CD4-positive, alpha-beta T cell (primary cell): ENCODE measurements at regions of chr4 and their contacts with region 1.

Region 1: GRCh38 chr4:83455281-83456129 is at the starts of genes HELQ and MRPS18C:
- DNase-seq: peak; percentile 85 to 99 (median 92)
- ATAC-seq: peak; percentile 86
- H3K4me3 ChIP-seq: peak within 1 kb of the TSS; percentile 88
- H3K4me3 Mint-ChIP-seq: peak within 1 kb of the TSS; percentile 99
- H3K27ac ChIP-seq: peak within 1 kb of the TSS; percentile 99 to 100
- H3K27ac Mint-ChIP-seq: peak within 1 kb of the TSS; percentile 100
- H3K4me1 ChIP-seq: peaks cover 12% of the 10 kb centered on the region
- H3K4me1 Mint-ChIP-seq: peaks cover 70% of the 10 kb centered on the region
- H3K27me3 ChIP-seq: no peaks in the 10 kb centered on the region
- H3K27me3 Mint-ChIP-seq: no peaks in the 10 kb centered on the region
- CTCF ChIP-seq: no peak
- total RNA-seq, gene HELQ: 21.5 to 24.1 TPM
- total RNA-seq, gene MRPS18C: 15.7 to 18.0 TPM

Region 2: GRCh38 chr4:82450966-82451755 is 1004.3 kb before region 1 on chr4:
- CTCF ChIA-PET with region 1: no interaction called
- POLR2A ChIA-PET with region 1: no interaction called
- intact Hi-C with region 1: loop called in 1 of 2 experiments (anchors 10 kb)
- DNase-seq: no peak
- ATAC-seq: no peak
- H3K4me3 ChIP-seq: no peak overlapping the region
- H3K4me3 Mint-ChIP-seq: no peak overlapping the region
- H3K27ac ChIP-seq: no peak overlapping the region
- H3K27ac Mint-ChIP-seq: no peak overlapping the region
- H3K4me1 ChIP-seq: no peaks in the 10 kb centered on the region
- H3K4me1 Mint-ChIP-seq: peaks cover 18% of the 10 kb centered on the region
- H3K27me3 ChIP-seq: no peaks in the 10 kb centered on the region
- H3K27me3 Mint-ChIP-seq: no peaks in the 10 kb centered on the region
- CTCF ChIP-seq: no peak

Region 3: DNA sequence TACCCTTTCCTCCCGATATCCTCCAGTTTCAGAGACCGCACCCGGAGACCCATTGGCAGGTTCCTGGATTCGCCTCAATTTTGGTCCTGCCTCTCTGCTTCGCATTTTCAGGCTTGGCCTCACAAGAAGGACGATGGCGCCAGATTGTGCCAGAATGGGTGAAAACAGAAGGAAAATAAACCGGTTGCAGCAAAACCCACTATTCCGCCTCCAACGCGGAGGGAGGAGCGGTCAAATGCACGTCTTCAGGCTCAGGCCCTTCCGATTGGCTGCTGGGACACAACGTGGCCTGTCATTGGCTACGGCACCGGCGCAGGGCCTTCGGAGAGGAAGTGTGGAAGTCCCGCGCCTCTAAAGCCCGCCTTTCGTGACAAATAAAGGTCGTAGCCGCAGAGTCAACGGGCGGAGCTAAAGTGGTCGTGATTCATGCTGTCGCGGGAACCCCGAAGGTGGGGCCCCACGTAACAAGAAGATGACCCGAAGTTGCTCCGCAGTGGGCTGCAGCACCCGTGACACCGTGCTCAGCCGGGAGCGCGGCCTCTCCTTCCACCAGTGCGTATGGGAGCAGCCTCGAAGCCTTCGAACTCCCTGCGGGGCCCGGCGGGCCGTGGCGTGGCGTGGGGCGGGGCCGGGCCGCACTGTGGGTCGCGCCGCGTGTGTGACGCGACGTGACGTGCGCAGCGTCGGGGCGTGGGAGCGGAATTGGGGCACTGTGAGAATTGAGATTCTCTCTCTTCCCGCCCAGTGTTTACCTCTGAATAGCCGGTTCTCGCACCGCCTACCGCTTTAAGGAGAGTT is 555.0 kb before region 1 on chr4 and contains the start of gene THAP9:
- CTCF ChIA-PET with region 1: no interaction called
- POLR2A ChIA-PET with region 1: interaction called, 10 read pairs
- intact Hi-C with region 1: loop called (anchors 5 kb)
- DNase-seq: peak; percentile 94 to 100 (median 96)
- ATAC-seq: peak; percentile 86
- H3K4me3 ChIP-seq: peak within 1 kb of the TSS; percentile 72
- H3K4me3 Mint-ChIP-seq: no peak within 1 kb of the TSS
- H3K27ac ChIP-seq: peak within 1 kb of the TSS; percentile 94 to 99
- H3K27ac Mint-ChIP-seq: no peak within 1 kb of the TSS
- H3K4me1 ChIP-seq: peaks cover 11% of the 10 kb centered on the region
- H3K4me1 Mint-ChIP-seq: peaks cover 13% of the 10 kb centered on the region
- H3K27me3 ChIP-seq: no peaks in the 10 kb centered on the region
- H3K27me3 Mint-ChIP-seq: no peaks in the 10 kb centered on the region
- CTCF ChIP-seq: no peak
- total RNA-seq, gene THAP9: 3.8 to 4.3 TPM

Region 4: DNA sequence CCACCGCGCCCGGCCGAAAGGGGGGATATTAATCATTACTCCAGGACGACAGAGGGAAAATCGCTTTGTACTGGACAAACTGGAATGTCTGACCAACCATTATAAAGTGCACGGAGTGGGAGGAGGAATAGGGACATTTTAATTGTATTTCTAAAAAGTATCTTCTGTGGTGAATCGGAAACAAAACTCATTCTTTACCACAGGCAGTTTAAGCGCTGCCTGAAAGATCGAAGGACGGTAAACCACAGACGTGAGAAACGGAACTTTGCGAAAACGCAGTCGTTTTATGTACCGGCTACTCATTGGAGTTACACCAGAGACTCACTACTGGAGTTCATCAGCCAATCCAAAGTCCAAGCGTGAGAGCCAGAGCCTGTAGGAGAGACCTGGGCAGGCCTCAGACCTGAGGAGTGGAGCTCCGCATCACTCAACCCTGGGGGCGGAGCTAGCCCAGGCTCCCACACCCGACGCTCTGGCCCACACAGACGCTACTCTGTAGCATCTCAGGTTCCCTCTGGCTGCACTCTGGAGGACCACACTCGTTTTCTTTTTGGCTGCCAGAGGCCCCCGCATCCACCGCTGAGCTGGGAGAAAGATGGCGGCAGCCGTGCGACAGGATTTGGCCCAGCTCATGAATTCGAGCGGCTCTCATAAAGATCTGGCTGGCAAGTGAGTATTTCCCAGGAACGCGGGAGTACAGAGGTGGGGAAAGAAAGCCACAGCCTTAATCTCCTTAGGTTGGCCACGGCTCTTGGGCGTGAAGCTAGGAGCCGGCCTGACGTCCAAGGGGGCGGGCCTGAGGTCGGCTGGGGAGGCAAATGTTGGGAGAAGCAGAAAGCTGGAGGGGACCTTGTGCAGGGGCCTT is 420.6 kb before region 1 on chr4 and contains the start of gene COPS4:
- CTCF ChIA-PET with region 1: no interaction called
- POLR2A ChIA-PET with region 1: interaction called, 41 read pairs
- intact Hi-C with region 1: loop called in 1 of 2 experiments (anchors 1 kb)
- DNase-seq: peak; percentile 86 to 100 (median 92)
- ATAC-seq: peak; percentile 95
- H3K4me3 ChIP-seq: peak within 1 kb of the TSS; percentile 83
- H3K4me3 Mint-ChIP-seq: peak within 1 kb of the TSS; percentile 99
- H3K27ac ChIP-seq: peak within 1 kb of the TSS; percentile 84
- H3K27ac Mint-ChIP-seq: peak within 1 kb of the TSS; percentile 90
- H3K4me1 ChIP-seq: peaks cover 28% of the 10 kb centered on the region
- H3K4me1 Mint-ChIP-seq: peaks cover 41% of the 10 kb centered on the region
- H3K27me3 ChIP-seq: no peaks in the 10 kb centered on the region
- H3K27me3 Mint-ChIP-seq: no peaks in the 10 kb centered on the region
- CTCF ChIP-seq: no peak
- total RNA-seq, gene COPS4: 26.0 to 27.6 TPM

Region 5: GRCh38 chr4:83440899-83441298 is 14.6 kb before region 1 on chr4:
- CTCF ChIA-PET with region 1: no interaction called
- POLR2A ChIA-PET with region 1: interaction called, 22 read pairs
- intact Hi-C with region 1: no loop called
- DNase-seq: no peak
- ATAC-seq: no peak
- H3K4me3 ChIP-seq: no peak overlapping the region
- H3K4me3 Mint-ChIP-seq: no peak overlapping the region
- H3K27ac ChIP-seq: no peak overlapping the region
- H3K27ac Mint-ChIP-seq: no peak overlapping the region
- H3K4me1 ChIP-seq: no peaks in the 10 kb centered on the region
- H3K4me1 Mint-ChIP-seq: no peaks in the 10 kb centered on the region
- H3K27me3 ChIP-seq: no peaks in the 10 kb centered on the region
- H3K27me3 Mint-ChIP-seq: no peaks in the 10 kb centered on the region
- CTCF ChIP-seq: no peak

Region 6: GRCh38 chr4:83639849-83640493 is 184.5 kb after region 1 on chr4:
- CTCF ChIA-PET with region 1: no interaction called
- POLR2A ChIA-PET with region 1: no interaction called
- intact Hi-C with region 1: no loop called
- DNase-seq: peak in 13 of 14 experiments; percentile 2 to 83 (median 44)
- ATAC-seq: peak; percentile 64
- H3K4me3 ChIP-seq: no peak overlapping the region
- H3K4me3 Mint-ChIP-seq: no peak overlapping the region
- H3K27ac ChIP-seq: no peak overlapping the region
- H3K27ac Mint-ChIP-seq: no peak overlapping the region
- H3K4me1 ChIP-seq: no peaks in the 10 kb centered on the region
- H3K4me1 Mint-ChIP-seq: peaks cover 4% of the 10 kb centered on the region
- H3K27me3 ChIP-seq: no peaks in the 10 kb centered on the region
- H3K27me3 Mint-ChIP-seq: peaks cover 11% of the 10 kb centered on the region
- CTCF ChIP-seq: peak; percentile 92